Naive thymus-derived CD4-positive, alpha-beta T cell (primary cell): ENCODE measurements at regions of chr11 and their contacts with region 1.

Region 1: DNA sequence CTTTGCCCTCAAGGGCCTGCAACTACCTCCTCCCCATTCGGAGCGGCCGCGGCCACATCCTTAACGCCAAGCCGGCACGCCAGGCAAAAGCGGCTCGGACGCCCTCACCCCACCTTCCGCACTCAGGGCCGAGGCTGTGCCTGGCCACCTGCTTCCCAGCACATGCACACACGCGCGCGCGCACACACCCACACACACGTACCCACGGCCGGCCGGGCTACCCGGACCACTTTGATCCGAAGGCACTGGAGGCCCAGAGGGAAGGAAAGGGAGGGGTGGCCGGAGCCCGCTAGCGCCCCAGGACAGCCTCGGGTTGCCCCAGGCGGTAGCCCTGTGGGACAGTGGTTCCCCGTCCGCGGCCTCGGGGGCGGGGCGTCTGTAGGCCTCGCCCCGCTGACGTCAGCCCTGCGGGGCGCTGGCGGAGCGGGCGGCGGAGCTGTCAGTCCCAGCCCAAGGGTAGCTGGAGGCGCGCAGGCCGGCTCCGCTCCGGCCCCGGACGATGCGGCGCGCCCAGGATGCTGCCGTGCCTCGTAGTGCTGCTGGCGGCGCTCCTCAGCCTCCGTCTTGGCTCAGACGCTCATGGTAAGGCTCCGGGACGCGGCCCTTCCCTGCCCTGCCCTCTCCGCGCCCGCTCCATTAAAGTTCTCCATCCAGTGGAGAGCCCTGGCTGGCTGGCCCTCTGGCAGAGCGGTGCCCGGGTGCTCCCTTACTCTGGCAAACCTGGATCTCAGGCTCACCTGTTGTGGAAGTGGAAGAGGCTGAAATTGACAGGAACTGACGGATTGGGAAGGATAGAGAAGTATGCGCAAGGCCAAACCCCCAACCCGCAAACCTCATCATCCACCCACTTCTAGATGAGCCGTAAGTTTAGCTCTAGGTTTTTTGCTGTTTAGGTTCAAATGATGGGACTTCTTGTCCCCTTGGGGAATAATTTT is at the start of gene IL10RA:
- DNase-seq: peak; percentile 72 to 95 (median 80)
- ATAC-seq: peak; percentile 92
- H3K4me3 ChIP-seq: peak within 1 kb of the TSS; percentile 97
- H3K4me3 Mint-ChIP-seq: peak within 1 kb of the TSS; percentile 84 to 97 (median 91)
- H3K27ac ChIP-seq: peak within 1 kb of the TSS; percentile 91
- H3K27ac Mint-ChIP-seq: peak within 1 kb of the TSS; percentile 87 to 98 (median 92)
- H3K4me1 ChIP-seq: peaks cover 43 to 45% of the 10 kb centered on the region in 2 donors
- H3K4me1 Mint-ChIP-seq: peaks cover 44 to 78% (median 69%) of the 10 kb centered on the region in 7 donors
- H3K27me3 ChIP-seq: no peaks in the 10 kb centered on the region
- H3K27me3 Mint-ChIP-seq: no peaks in the 10 kb centered on the region
- total RNA-seq, gene IL10RA: 154 to 300 (median 184) TPM

Region 2: DNA sequence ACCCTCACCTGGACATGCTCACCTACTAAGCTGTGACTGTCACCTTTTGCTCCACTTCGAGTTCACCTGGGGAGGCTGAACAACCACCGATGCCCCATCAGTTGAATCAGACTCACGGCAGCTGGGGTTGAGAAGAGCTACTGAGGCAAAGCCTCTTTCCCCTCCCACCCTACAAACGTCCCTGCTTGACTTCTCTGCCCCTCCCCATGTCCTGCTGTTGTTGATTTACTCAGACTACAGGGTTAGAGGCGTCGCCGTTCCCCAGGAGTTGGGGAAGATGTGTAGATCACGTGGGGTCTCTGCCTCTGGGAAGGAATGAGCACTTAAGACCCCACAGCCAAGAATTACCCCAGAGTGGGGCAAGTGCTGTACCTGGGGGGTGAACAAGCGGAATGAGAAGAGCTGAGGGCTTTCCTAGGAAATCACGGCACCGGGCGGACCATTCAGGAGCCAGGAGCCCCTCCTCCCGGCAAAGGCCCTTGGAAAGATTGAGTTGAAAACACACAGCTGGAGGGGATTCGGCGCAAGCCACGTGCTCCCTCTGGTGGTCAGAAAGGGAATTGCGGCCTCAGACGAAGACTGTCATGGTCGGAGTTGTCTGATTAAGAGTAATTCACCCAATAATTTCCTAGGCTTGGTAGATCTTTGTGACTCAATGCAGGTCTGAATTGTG is 168.7 kb before region 1 on chr11:
- CTCF ChIA-PET with region 1: interaction called, 5 read pairs
- POLR2A ChIA-PET with region 1: interaction called, 3 read pairs
- intact Hi-C with region 1: loop called in 1 of 2 experiments (anchors 2 kb)
- DNase-seq: peak; percentile 64 to 91 (median 76)
- ATAC-seq: peak; percentile 46
- H3K4me3 ChIP-seq: no peak overlapping the region
- H3K4me3 Mint-ChIP-seq: peak overlapping the region; percentile 4 to 83 (median 38)
- H3K27ac ChIP-seq: no peak overlapping the region
- H3K27ac Mint-ChIP-seq: peak overlapping the region; percentile 61 to 93 (median 80)
- H3K4me1 ChIP-seq: peaks cover 44 to 56% of the 10 kb centered on the region in 2 donors
- H3K4me1 Mint-ChIP-seq: peaks cover 35 to 63% (median 51%) of the 10 kb centered on the region in 7 donors
- H3K27me3 ChIP-seq: no peaks in the 10 kb centered on the region
- H3K27me3 Mint-ChIP-seq: no peaks in the 10 kb centered on the region

Region 3: GRCh38 chr11:117898059-117898458 is 88.2 kb before region 1 on chr11:
- CTCF ChIA-PET with region 1: no interaction called
- POLR2A ChIA-PET with region 1: no interaction called
- intact Hi-C with region 1: no loop called
- DNase-seq: no peak
- ATAC-seq: no peak
- H3K4me3 ChIP-seq: no peak overlapping the region
- H3K4me3 Mint-ChIP-seq: no peak overlapping the region
- H3K27ac ChIP-seq: no peak overlapping the region
- H3K27ac Mint-ChIP-seq: peak overlapping the region in 1 of 9 donors; percentile 46
- H3K4me1 ChIP-seq: no peaks in the 10 kb centered on the region
- H3K4me1 Mint-ChIP-seq: peaks cover 0 to 11% (median 0%) of the 10 kb centered on the region in 7 donors
- H3K27me3 ChIP-seq: peaks cover 0 to 3% of the 10 kb centered on the region in 2 donors
- H3K27me3 Mint-ChIP-seq: peaks cover 0 to 34% (median 4%) of the 10 kb centered on the region in 5 donors

Region 4: GRCh38 chr11:117953024-117953671 is 33.1 kb before region 1 on chr11:
- CTCF ChIA-PET with region 1: interaction called, 70 read pairs
- POLR2A ChIA-PET with region 1: interaction called, 302 read pairs
- intact Hi-C with region 1: loop called (anchors 1 kb)
- DNase-seq: peak in 7 of 9 donors; percentile 55 to 77 (median 73)
- ATAC-seq: peak; percentile 58
- H3K4me3 ChIP-seq: peak overlapping the region; percentile 22
- H3K4me3 Mint-ChIP-seq: peak overlapping the region; percentile 75 to 92 (median 82)
- H3K27ac ChIP-seq: peak overlapping the region; percentile 58
- H3K27ac Mint-ChIP-seq: peak overlapping the region; percentile 87 to 96 (median 90)
- H3K4me1 ChIP-seq: peaks cover 59 to 68% of the 10 kb centered on the region in 2 donors
- H3K4me1 Mint-ChIP-seq: peaks cover 58 to 100% (median 98%) of the 10 kb centered on the region in 7 donors
- H3K27me3 ChIP-seq: no peaks in the 10 kb centered on the region
- H3K27me3 Mint-ChIP-seq: no peaks in the 10 kb centered on the region

Region 5: DNA sequence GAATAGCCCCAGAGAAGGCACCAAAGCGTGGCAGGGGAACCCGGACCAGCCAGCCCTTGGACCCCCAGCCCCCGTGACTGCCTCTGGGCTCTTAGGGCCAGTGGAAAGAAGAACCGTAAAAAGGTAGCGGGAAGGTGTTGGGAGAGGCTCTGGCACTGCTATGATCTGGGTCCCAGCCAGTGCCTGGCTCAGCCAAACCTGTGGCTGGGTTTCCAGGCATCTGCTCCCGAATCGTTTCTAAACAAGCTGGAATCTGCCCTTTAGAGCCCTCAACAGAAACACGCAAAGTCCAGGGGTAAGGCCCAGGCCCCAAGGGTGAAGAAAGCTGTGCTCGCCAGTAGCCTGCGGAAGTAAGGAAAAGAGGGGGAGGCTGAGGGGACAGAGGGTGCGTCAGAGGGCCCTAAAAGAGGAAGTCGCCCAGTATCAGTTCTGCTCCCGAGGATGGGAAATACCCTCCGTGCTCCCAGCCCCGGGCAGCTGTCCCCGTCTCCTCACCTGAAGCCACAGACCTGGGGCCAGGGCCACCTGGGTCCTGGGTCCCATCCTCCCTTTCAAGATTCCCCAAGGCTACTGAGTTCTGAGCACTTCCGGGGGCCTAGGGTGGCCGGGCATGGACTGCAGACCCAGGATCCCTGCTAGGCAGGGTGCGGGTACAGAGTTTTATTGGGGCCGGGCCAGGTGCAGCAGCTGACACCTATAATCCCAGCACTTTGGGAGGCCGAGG is 24.7 kb after region 1 on chr11:
- CTCF ChIA-PET with region 1: interaction called, 4 read pairs
- POLR2A ChIA-PET with region 1: interaction called, 255 read pairs
- intact Hi-C with region 1: loop called in 1 of 2 experiments (anchors 1 kb)
- DNase-seq: no peak
- ATAC-seq: peak; percentile 76
- H3K4me3 ChIP-seq: no peak overlapping the region
- H3K4me3 Mint-ChIP-seq: peak overlapping the region in 1 of 10 donors; percentile 56
- H3K27ac ChIP-seq: no peak overlapping the region
- H3K27ac Mint-ChIP-seq: peak overlapping the region in 4 of 9 donors; percentile 9 to 92 (median 52)
- H3K4me1 ChIP-seq: peaks cover 72 to 98% of the 10 kb centered on the region in 2 donors
- H3K4me1 Mint-ChIP-seq: peaks cover 82 to 93% (median 85%) of the 10 kb centered on the region in 7 donors
- H3K27me3 ChIP-seq: no peaks in the 10 kb centered on the region
- H3K27me3 Mint-ChIP-seq: no peaks in the 10 kb centered on the region

Region 6: DNA sequence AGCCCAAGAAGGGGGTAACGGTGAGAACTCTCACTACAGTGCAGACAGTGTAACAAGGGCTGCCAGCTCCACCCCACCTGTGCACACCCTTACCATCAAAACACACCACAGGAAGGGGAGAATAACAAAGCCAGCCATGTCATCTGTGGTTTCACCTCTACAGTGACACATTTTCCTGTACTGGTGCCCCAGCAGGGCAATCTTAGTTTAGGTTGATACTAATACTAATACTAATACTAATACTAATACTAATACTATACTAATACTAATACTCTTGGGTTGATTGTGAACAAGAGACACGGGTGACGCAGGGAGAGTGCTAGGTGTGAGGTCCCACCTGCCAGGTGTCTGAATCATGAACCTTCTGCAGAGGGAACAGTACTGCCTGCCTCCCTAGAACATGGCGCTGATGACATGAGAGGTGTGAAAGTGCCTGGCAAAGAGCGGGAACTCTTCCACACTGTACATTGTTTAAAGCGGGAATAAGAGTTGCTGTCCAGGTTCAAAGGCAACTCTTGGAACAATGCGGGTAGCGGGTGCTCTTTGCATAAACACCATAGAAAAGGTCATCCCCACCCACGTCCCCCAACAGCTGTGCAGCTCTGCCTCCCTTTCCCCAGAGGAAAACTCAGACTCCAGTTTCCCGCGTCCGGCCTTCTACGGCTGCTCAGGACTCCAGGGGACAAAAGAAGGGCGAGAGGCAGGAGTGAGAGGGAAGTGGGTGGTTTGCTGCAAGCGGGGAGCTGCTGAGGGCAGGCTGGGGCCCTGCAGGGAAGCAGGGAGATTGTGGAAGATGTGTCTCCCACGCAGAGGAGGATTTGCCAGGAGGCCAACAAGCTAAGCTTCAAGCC is 65.6 kb after region 1 on chr11:
- CTCF ChIA-PET with region 1: interaction called, 33 read pairs
- POLR2A ChIA-PET with region 1: interaction called, 75 read pairs
- intact Hi-C with region 1: loop called (anchors 1 kb)
- DNase-seq: peak in 8 of 9 donors; percentile 34 to 91 (median 88)
- ATAC-seq: peak; percentile 98
- H3K4me3 ChIP-seq: peak overlapping the region; percentile 29
- H3K4me3 Mint-ChIP-seq: peak overlapping the region; percentile 74 to 94 (median 80)
- H3K27ac ChIP-seq: peak overlapping the region; percentile 65
- H3K27ac Mint-ChIP-seq: peak overlapping the region; percentile 94 to 100 (median 96)
- H3K4me1 ChIP-seq: peaks cover 60 to 65% of the 10 kb centered on the region in 2 donors
- H3K4me1 Mint-ChIP-seq: peaks cover 45 to 64% (median 57%) of the 10 kb centered on the region in 7 donors
- H3K27me3 ChIP-seq: no peaks in the 10 kb centered on the region
- H3K27me3 Mint-ChIP-seq: no peaks in the 10 kb centered on the region

Region 7: GRCh38 chr11:118117790-118118601 is 131.8 kb after region 1 on chr11:
- CTCF ChIA-PET with region 1: no interaction called
- POLR2A ChIA-PET with region 1: no interaction called
- intact Hi-C with region 1: no loop called
- DNase-seq: no peak
- ATAC-seq: no peak
- H3K4me3 ChIP-seq: no peak overlapping the region
- H3K4me3 Mint-ChIP-seq: peak overlapping the region in 1 of 10 donors; percentile 15
- H3K27ac ChIP-seq: no peak overlapping the region
- H3K27ac Mint-ChIP-seq: no peak overlapping the region
- H3K4me1 ChIP-seq: no peaks in the 10 kb centered on the region
- H3K4me1 Mint-ChIP-seq: peaks cover 0 to 25% (median 0%) of the 10 kb centered on the region in 7 donors
- H3K27me3 ChIP-seq: no peaks in the 10 kb centered on the region
- H3K27me3 Mint-ChIP-seq: peaks cover 10 to 34% (median 13%) of the 10 kb centered on the region in 5 donors